ENCODE measurements at regions of chr16 and their contacts with region 1.

Region 1: DNA sequence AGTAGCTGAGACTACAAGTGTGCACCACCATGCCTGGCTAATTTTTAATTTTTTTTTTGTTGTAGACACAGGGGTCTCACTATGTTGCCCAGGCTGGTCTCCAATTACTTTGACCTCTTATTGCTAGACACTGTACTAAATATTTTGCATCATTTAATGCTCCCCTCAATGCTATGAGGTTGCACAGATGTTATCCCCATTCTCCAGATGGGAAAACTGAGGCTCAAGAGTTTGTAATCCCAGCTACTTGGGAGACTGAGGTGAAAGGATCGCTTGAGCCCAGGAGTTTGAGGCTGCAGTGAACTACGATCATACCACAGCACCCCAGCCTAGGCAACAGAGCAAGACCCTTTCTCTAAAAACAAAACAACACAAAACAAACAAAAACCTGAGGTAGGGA is 443.3 kb upstream of the C16orf82 start:
- DNase-seq: no peak

Region 2: DNA sequence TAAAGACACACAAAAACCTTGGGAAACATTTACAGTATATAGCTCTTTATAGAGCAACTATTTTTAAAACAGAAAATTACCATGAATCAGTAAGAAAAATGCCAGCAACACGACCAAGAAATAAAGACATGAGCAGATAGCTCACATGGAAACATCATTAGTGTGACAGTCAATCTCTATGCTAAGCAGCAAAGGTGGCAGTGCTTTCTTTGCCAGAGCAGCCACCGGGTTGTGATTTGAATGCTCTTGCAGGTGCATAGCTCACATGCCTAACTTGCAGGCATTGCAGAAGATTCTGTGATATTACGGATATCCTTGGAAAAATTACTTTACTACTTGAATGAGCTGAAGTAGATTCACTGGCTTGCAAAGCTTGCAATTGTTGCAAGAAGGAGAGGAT is 209.7 kb before region 1 on chr16:
- intact Hi-C with region 1: no loop called
- DNase-seq: no peak

Region 3: DNA sequence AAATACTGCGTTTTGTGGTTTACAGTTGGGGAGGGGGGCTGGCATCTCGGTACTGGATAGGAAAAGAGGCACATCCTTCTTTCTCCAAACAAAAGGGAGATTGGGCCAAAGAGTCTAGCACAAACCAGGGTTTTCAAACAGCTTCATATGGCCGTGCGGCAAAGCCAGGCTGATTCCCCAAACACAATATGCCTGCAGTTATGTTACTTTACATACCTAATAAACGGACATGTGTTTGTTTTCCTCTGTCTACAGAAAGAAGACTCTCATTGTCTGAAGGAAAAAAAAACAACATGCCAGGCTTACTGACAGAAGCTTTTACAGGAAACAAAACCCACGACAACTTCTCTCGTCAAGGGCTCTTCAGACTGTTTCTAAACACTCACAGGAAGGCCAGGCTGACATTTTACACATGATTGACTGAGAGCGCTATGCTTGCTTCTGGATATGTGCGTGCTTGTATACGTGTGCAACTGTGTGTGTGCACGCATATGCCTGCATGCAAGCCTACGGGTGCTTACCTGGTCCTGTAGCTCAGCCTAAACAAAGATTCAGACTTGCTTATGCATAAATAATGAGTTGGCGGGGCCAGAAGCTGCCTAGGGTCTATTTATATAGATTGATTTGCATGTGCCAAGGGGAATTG is 17.7 kb before region 1 on chr16:
- intact Hi-C with region 1: no loop called
- DNase-seq: no peak

Region 4: GRCh38 chr16:26795184-26795583 is 171.7 kb after region 1 on chr16:
- intact Hi-C with region 1: loop called in 1 of 2 experiments (anchors 10 kb)
- DNase-seq: no peak

Measured in posterior vena cava (tissue), 2 donors.